ENCODE measurements at regions of chr12 and their contacts with region 1.

Region 1: GRCh38 chr12:2783936-2784600 is 10.7 kb upstream of the FKBP4 start:
- DNase-seq: peak; percentile 67 to 76
- H3K4me3 ChIP-seq: no peak overlapping the region
- H3K4me3 Mint-ChIP-seq: peak overlapping the region; percentile 53
- H3K27ac Mint-ChIP-seq: no peak overlapping the region
- H3K4me1 ChIP-seq: peaks cover 24% of the 10 kb centered on the region
- H3K4me1 Mint-ChIP-seq: peaks cover 21% of the 10 kb centered on the region
- H3K27me3 ChIP-seq: 0 out of 2 replicates have a peak, but pooled peaks cover 2% of the 10 kb centered on the region
- H3K27me3 Mint-ChIP-seq: peaks cover 29% of the 10 kb centered on the region
- CTCF ChIP-seq: peak; percentile 95 to 97

Region 2: GRCh38 chr12:2682296-2683251 is 101.5 kb before region 1 on chr12:
- CTCF ChIA-PET with region 1: interaction called, 4 read pairs
- POLR2A ChIA-PET with region 1: no interaction called
- intact Hi-C with region 1: loop called (anchors 1 kb)
- DNase-seq: peak; percentile 71 to 83
- H3K4me3 ChIP-seq: no peak overlapping the region
- H3K4me3 Mint-ChIP-seq: peak overlapping the region; percentile 2
- H3K27ac Mint-ChIP-seq: peak overlapping the region; percentile 11
- H3K4me1 ChIP-seq: no peaks in the 10 kb centered on the region
- H3K4me1 Mint-ChIP-seq: no peaks in the 10 kb centered on the region
- H3K27me3 ChIP-seq: no peaks in the 10 kb centered on the region
- H3K27me3 Mint-ChIP-seq: peaks cover 31% of the 10 kb centered on the region
- CTCF ChIP-seq: peak; percentile 13 to 48

Region 3: GRCh38 chr12:2739817-2740641 is 44.0 kb before region 1 on chr12:
- CTCF ChIA-PET with region 1: interaction called, 28 read pairs
- POLR2A ChIA-PET with region 1: no interaction called
- intact Hi-C with region 1: loop called (anchors 1 kb)
- DNase-seq: peak in 1 of 2 experiments; percentile 64
- H3K4me3 ChIP-seq: no peak overlapping the region
- H3K4me3 Mint-ChIP-seq: no peak overlapping the region
- H3K27ac Mint-ChIP-seq: no peak overlapping the region
- H3K4me1 ChIP-seq: no peaks in the 10 kb centered on the region
- H3K4me1 Mint-ChIP-seq: no peaks in the 10 kb centered on the region
- H3K27me3 ChIP-seq: peaks cover 1% of the 10 kb centered on the region
- H3K27me3 Mint-ChIP-seq: peaks cover 29% of the 10 kb centered on the region
- CTCF ChIP-seq: peak; percentile 78 to 82

Region 4: DNA sequence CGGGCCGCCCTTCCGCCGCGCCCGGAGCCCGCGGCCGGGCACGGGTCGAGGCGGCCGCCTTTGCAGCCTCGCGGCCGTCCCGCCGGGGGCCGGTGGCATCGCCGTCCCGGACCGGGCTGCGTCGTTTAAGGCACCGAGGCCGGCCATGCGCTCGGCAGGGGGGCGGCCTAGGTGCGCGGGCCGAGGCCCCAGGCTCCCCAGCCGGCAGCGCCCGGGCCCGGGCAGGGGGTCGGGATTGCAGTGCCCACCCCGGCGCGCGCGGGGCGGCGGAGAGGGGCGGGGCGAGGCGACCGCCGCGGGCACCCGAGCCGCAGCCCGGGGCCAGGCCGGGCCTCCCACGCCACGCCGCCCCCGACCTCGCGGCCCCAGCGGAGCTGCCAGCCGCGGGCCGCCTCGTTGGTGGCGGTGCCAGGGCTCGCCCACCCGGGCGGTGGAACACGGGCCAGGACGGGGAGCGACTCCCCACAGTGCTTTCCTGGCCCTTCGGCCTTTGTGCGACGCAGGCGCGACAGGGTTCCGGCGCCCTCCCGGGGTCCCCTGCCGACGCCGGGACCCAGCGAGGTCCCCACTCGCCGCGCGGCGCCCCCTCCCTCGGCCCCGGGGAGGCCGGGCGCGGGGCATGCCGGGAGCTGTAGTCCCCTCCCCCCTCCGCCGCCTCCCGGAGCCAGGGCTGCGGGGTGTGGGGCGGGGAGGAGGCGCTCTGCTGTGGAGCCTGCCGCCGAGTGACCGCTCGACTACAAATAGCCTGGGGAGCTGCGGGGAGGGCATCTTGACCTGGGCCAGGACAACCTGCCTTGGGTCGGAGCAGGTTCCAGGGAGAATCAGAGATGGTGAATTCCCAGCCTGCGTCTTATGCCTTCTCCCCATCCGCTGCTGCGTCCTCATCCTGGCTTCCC is 11.5 kb after region 1 on chr12:
- CTCF ChIA-PET with region 1: interaction called, 13 read pairs
- POLR2A ChIA-PET with region 1: no interaction called
- intact Hi-C with region 1: no loop called
- DNase-seq: peak; percentile 81 to 88
- H3K4me3 ChIP-seq: peak overlapping the region; percentile 81
- H3K4me3 Mint-ChIP-seq: peak overlapping the region; percentile 89
- H3K27ac Mint-ChIP-seq: peak overlapping the region; percentile 84
- H3K4me1 ChIP-seq: peaks cover 15% of the 10 kb centered on the region
- H3K4me1 Mint-ChIP-seq: peaks cover 16% of the 10 kb centered on the region
- H3K27me3 ChIP-seq: no peaks in the 10 kb centered on the region
- H3K27me3 Mint-ChIP-seq: no peaks in the 10 kb centered on the region
- CTCF ChIP-seq: no peak

Region 5: DNA sequence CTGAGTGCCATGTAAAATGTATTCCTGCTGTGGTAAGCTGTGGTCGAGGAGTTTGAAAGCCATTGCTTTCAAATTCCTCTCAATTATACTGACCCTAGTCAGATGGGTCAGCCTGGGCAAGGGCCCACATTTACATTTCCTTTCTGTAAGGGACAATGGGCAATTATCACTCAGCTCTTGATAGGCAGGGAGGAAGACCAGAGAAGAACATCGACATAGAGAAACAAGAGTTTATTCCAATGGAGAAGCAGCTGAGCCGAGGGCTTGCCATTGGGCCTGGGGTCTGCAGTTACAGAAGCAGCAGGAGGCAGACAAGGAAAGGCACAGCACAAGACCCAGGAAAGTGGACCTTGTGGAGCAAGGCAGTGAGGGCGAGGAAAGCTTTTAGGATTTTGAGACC is 41.1 kb after region 1 on chr12:
- CTCF ChIA-PET with region 1: no interaction called
- POLR2A ChIA-PET with region 1: no interaction called
- intact Hi-C with region 1: no loop called
- DNase-seq: no peak
- H3K4me3 ChIP-seq: no peak overlapping the region
- H3K4me3 Mint-ChIP-seq: no peak overlapping the region
- H3K27ac Mint-ChIP-seq: no peak overlapping the region
- H3K4me1 ChIP-seq: no peaks in the 10 kb centered on the region
- H3K4me1 Mint-ChIP-seq: no peaks in the 10 kb centered on the region
- H3K27me3 ChIP-seq: no peaks in the 10 kb centered on the region
- H3K27me3 Mint-ChIP-seq: no peaks in the 10 kb centered on the region
- CTCF ChIP-seq: no peak

Measured in Caco-2 (cell line).